Activated CD8-positive, alpha-beta T cell treated with anti-CD3 and anti-CD28 coated beads for 36 hours (primary cell): ENCODE measurements at regions of chr11 and their contacts with region 1.

Region 1: DNA sequence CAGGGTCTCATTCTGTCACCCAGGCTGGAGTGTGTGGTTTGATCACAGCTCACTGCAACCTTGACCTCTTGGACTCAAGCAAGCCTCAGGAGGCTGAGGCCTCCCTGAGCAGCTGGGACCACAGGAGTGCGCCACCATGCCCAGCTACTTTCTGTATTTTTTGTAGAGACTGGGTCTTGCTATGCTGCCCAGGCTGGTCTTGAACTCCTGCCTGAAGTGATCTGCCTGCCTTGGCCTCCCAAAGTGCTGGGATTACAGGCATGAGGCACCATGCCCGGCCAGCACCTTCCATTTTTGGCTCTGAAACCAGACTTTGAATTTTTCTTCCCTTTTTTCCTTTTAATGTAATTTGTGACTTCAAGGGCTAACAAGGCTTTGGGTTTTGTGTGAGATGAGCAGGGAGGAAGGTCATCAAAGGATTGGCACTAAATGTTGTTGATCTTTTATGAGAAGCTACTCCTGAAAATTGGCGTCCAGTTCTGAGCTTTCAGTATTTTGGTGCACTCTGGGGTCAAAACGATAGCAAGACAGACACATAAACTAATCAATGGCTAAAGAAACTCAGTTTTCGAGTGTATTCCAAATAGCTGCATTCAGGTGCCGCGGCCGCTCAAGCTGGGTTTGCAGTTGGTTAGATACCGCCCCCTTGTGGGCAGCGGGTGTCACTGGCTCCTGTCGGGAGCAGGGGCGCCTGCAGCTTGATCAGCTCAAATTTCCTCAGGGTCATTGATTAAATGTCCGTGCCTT is 51.9 kb upstream of the CLMP start:
- DNase-seq: peak; percentile 89
- ATAC-seq: peak; percentile 93
- H3K4me3 Mint-ChIP-seq: no peak overlapping the region
- H3K27ac Mint-ChIP-seq: no peak overlapping the region
- H3K4me1 Mint-ChIP-seq: peaks cover 4% of the 10 kb centered on the region
- H3K27me3 Mint-ChIP-seq: peaks cover 11% of the 10 kb centered on the region
- CTCF ChIP-seq: peak; percentile 98

Region 2: DNA sequence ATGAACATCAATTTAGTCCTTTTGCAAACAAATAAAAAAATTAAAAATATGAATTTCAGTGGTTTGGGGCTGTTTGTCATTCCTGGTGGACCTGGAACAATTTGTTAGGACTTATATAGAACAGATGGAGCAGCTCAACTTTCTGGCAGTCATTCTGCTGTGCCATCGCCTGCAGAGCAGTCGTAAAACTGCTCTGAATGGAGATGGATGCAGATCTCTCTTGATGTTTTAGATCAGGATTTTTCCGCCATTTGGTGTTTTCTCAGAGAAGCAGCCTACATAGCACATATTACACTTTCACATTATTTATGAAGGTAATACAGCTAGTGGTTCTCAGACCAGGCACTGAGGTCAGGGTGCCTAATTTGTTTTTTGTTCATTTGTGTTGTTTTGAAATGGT is 153.2 kb before region 1 on chr11:
- CTCF ChIA-PET with region 1: interaction called, 25 read pairs
- POLR2A ChIA-PET with region 1: no interaction called
- intact Hi-C with region 1: no loop called
- DNase-seq: no peak
- ATAC-seq: no peak
- H3K4me3 Mint-ChIP-seq: no peak overlapping the region
- H3K27ac Mint-ChIP-seq: no peak overlapping the region
- H3K4me1 Mint-ChIP-seq: no peaks in the 10 kb centered on the region
- H3K27me3 Mint-ChIP-seq: no peaks in the 10 kb centered on the region
- CTCF ChIP-seq: no peak

Region 3: DNA sequence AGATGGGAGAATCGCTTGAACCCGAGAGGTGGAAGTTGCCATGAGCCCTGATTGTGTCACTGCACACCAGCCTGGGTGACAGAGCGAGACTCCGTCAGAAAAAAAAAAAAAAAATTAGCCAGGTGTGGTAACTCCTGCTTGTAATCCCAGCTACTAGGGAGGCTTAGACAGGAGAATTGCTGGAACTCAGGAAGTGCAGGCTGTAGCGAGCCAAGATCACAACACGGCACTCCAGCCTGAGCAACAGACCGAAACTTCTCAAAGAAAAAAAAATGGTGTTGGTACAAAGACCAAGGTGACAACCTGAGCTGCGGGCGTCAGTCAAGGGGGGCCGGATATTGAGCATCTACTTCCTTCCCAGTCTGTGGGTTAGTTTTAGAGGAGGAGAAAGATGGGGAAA is 136.6 kb before region 1 on chr11:
- CTCF ChIA-PET with region 1: interaction called, 281 read pairs
- POLR2A ChIA-PET with region 1: interaction called, 5 read pairs
- intact Hi-C with region 1: loop called (anchors 1 kb)
- DNase-seq: no peak
- ATAC-seq: no peak
- H3K4me3 Mint-ChIP-seq: no peak overlapping the region
- H3K27ac Mint-ChIP-seq: peak overlapping the region; percentile 63
- H3K4me1 Mint-ChIP-seq: peaks cover 3% of the 10 kb centered on the region
- H3K27me3 Mint-ChIP-seq: no peaks in the 10 kb centered on the region
- CTCF ChIP-seq: no peak

Region 4: GRCh38 chr11:123152956-123153355 is 94.0 kb before region 1 on chr11:
- CTCF ChIA-PET with region 1: interaction called, 14 read pairs
- POLR2A ChIA-PET with region 1: no interaction called
- intact Hi-C with region 1: no loop called
- DNase-seq: no peak
- ATAC-seq: no peak
- H3K4me3 Mint-ChIP-seq: no peak overlapping the region
- H3K27ac Mint-ChIP-seq: no peak overlapping the region
- H3K4me1 Mint-ChIP-seq: no peaks in the 10 kb centered on the region
- H3K27me3 Mint-ChIP-seq: peaks cover 1% of the 10 kb centered on the region
- CTCF ChIP-seq: no peak

Region 5: GRCh38 chr11:123174196-123175183 is 72.4 kb before region 1 on chr11:
- CTCF ChIA-PET with region 1: interaction called, 10 read pairs
- POLR2A ChIA-PET with region 1: no interaction called
- intact Hi-C with region 1: no loop called
- DNase-seq: no peak
- ATAC-seq: no peak
- H3K4me3 Mint-ChIP-seq: no peak overlapping the region
- H3K27ac Mint-ChIP-seq: no peak overlapping the region
- H3K4me1 Mint-ChIP-seq: peaks cover 4% of the 10 kb centered on the region
- H3K27me3 Mint-ChIP-seq: no peaks in the 10 kb centered on the region
- CTCF ChIP-seq: no peak

Region 6: DNA sequence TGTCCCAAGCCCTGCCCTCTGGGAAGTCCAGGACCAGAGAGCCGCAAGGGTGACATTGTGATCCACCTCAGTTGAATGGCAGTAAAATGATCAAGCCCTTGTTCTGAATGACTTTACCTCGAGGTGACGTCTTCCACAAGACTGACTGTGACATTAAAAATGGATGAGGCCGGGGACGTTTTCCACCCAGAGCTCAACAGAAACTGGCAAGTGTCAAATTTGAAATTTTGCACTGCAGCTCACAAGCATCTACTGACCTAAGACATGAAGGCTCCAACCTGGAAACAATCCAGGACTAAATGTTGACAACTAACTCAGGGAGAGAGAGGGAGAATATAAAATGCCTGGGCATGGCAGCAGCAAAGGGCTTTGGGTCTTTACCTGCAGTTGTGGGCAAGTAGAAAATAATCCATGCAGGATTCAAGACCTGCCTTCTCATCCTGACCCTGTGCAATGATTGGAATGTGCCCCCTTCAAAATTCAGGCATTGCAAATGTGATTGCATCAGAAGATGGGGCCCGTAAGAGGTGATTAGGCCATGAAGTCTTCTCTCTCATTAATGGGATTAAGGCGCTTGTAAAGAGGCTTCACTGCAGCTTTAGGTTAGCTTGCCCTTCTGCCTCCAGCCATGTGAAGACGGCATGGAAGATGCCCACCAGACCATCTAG is 18.3 kb before region 1 on chr11:
- CTCF ChIA-PET with region 1: interaction called, 51 read pairs
- POLR2A ChIA-PET with region 1: no interaction called
- intact Hi-C with region 1: no loop called
- DNase-seq: no peak
- ATAC-seq: no peak
- H3K4me3 Mint-ChIP-seq: no peak overlapping the region
- H3K27ac Mint-ChIP-seq: no peak overlapping the region
- H3K4me1 Mint-ChIP-seq: peaks cover 12% of the 10 kb centered on the region
- H3K27me3 Mint-ChIP-seq: peaks cover 9% of the 10 kb centered on the region
- CTCF ChIP-seq: no peak

Region 7: GRCh38 chr11:123261345-123262106 is 14.6 kb after region 1 on chr11:
- CTCF ChIA-PET with region 1: interaction called, 115 read pairs
- POLR2A ChIA-PET with region 1: interaction called, 3 read pairs
- intact Hi-C with region 1: no loop called
- DNase-seq: peak; percentile 88
- ATAC-seq: peak; percentile 93
- H3K4me3 Mint-ChIP-seq: no peak overlapping the region
- H3K27ac Mint-ChIP-seq: no peak overlapping the region
- H3K4me1 Mint-ChIP-seq: peaks cover 6% of the 10 kb centered on the region
- H3K27me3 Mint-ChIP-seq: peaks cover 25% of the 10 kb centered on the region
- CTCF ChIP-seq: peak; percentile 88